ENCODE measurements at regions of chr9 and their contacts with region 1.

Region 1: GRCh38 chr9:85940832-85941621 is at the start of gene NAA35:
- DNase-seq: peak; percentile 99
- H3K4me3 Mint-ChIP-seq: no peak within 1 kb of the TSS
- H3K27ac Mint-ChIP-seq: peak within 1 kb of the TSS; percentile 97
- H3K4me1 Mint-ChIP-seq: peaks cover 16% of the 10 kb centered on the region
- H3K27me3 Mint-ChIP-seq: no peaks in the 10 kb centered on the region
- total RNA-seq, gene NAA35: 28.6 and 32.9 TPM in 2 replicates

Region 2: GRCh38 chr9:84759300-84759750 is 1181.7 kb before region 1 on chr9:
- intact Hi-C with region 1: loop called (anchors 10 kb)
- DNase-seq: peak; percentile 49
- H3K4me3 Mint-ChIP-seq: peak overlapping the region; percentile 59
- H3K27ac Mint-ChIP-seq: peak overlapping the region; percentile 83
- H3K4me1 Mint-ChIP-seq: peaks cover 55% of the 10 kb centered on the region
- H3K27me3 Mint-ChIP-seq: no peaks in the 10 kb centered on the region

Region 3: GRCh38 chr9:85702726-85703289 is 238.2 kb before region 1 on chr9:
- intact Hi-C with region 1: loop called (anchors 5 kb)
- DNase-seq: no peak
- H3K4me3 Mint-ChIP-seq: no peak overlapping the region
- H3K27ac Mint-ChIP-seq: no peak overlapping the region
- H3K4me1 Mint-ChIP-seq: no peaks in the 10 kb centered on the region
- H3K27me3 Mint-ChIP-seq: no peaks in the 10 kb centered on the region

Region 4: GRCh38 chr9:86112057-86112456 is 171.0 kb after region 1 on chr9:
- intact Hi-C with region 1: loop called (anchors 2 kb)
- DNase-seq: no peak
- H3K4me3 Mint-ChIP-seq: no peak overlapping the region
- H3K27ac Mint-ChIP-seq: no peak overlapping the region
- H3K4me1 Mint-ChIP-seq: peaks cover 2% of the 10 kb centered on the region
- H3K27me3 Mint-ChIP-seq: peaks cover 8% of the 10 kb centered on the region

Region 5: DNA sequence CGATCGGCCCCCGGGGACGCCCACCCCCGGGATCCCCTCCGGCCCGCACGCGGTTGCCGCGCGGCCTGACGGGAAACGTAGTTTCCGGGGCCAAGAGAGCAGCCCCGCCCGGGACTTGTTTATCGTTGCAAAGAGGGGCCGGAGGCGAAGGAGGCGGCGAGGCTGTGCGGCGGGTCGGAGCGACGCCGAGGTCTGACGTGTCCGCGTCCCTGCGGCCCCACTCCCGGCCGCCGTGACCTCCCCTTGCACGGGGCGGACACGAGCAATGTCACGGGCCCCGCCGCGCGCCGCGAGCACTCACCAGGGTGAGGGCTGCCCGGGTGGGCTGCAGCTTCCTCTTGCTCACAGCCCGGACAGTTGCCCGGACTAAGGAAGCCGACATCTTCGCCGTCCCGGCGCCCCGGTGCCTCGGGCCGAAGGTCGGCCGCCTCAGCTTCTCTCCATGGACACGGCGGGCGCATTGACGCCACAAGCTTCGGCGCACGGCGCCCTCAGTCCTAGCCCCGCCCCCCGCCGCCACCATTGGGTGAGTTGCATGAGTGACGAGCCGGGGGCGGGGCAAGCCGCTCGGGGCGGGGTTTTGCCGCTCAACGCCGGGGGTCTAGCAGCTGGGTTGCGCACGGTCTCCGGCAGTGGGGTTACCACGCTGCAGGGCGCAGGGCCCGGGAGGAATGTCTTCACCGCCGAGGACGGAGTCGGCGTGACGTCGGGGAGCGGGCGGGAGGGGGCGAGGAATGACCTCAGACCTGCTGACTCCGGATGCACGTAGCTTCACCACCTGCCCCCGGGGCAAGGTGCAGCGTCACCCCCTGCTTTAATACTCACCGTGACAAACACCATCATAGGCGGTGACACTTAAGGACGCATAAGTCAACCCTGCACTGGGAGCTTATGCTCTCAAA is 341.3 kb after region 1 on chr9 and contains the start of gene ISCA1:
- intact Hi-C with region 1: loop called (anchors 1 kb)
- DNase-seq: peak; percentile 91
- H3K4me3 Mint-ChIP-seq: peak within 1 kb of the TSS; percentile 89
- H3K27ac Mint-ChIP-seq: peak within 1 kb of the TSS; percentile 96
- H3K4me1 Mint-ChIP-seq: peaks cover 42% of the 10 kb centered on the region
- H3K27me3 Mint-ChIP-seq: no peaks in the 10 kb centered on the region
- total RNA-seq, gene ISCA1: 27.4 and 30.3 TPM in 2 replicates

Measured in activated T-helper 1 cell treated with anti-CD3 and anti-CD28 coated beads, Interleukin-12 subunit alpha, Interleukin-12 subunit beta, Interleukin-2, Interleukin-4 antibody, amounts not matched to agents 30 ng/mL and 10 ng/mL and 1 ng/mL, durations not matched to agents 14 hours and 24 hours and 36 hours (primary cell).